ENCODE measurements at regions of chr3 and their contacts with region 1.

Region 1: DNA sequence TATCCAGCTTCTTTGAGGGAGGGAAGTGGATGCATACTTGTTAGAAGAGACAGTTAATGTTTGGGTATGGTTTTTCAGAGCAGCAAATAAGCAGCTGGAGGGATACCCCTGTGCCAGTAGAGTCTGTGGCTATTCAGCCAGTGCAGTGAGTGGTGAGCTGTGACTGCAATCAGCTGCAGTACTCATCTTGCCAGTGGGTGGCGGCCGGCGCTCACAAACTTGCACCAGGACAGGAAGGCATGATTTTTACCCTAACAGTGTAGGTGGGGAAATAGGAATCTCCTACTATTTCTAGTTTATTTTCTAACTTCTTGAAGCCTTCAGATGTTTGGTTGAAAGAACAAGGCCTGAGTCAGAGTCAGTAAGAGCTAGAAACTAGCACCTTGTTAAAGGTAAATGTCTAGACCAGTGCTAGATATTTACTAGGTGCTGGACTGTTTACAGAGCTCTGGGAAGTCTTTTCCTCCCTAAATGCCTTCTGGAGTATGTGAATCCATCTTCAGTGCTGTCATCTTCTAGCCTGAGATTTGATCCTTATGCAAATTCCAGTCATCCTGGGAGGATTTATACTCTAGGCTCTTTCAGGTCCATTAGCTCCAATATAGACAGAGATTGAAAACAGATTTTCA is 23.6 kb downstream of the TIMP4 start:
- DNase-seq: peak; percentile 85
- ATAC-seq: peak; percentile 78

Region 2: GRCh38 chr3:12175844-12176453 is 40.8 kb after region 1 on chr3:
- intact Hi-C with region 1: loop called (anchors 5 kb)
- DNase-seq: peak; percentile 77
- ATAC-seq: peak; percentile 88

Region 3: GRCh38 chr3:12484198-12484974 is 349.2 kb after region 1 on chr3 and contains the start of gene TSEN2:
- intact Hi-C with region 1: loop called (anchors 5 kb)
- DNase-seq: peak; percentile 98
- ATAC-seq: peak; percentile 96
- total RNA-seq, gene TSEN2: 23.1 TPM